ENCODE measurements at regions of chr17 and their contacts with region 1.

Region 1: GRCh38 chr17:75679706-75680442 is 12.7 kb downstream of the SAP30BP start:
- DNase-seq: no peak
- ATAC-seq: peak in 2 of 4 donors; percentile 55 to 60
- H3K4me3 ChIP-seq: no peak overlapping the region
- H3K27ac ChIP-seq: peak overlapping the region; percentile 23
- H3K4me1 ChIP-seq: peaks cover 33% of the 10 kb centered on the region
- H3K27me3 ChIP-seq: no peaks in the 10 kb centered on the region
- CTCF ChIP-seq: peak; percentile 21

Region 2: DNA sequence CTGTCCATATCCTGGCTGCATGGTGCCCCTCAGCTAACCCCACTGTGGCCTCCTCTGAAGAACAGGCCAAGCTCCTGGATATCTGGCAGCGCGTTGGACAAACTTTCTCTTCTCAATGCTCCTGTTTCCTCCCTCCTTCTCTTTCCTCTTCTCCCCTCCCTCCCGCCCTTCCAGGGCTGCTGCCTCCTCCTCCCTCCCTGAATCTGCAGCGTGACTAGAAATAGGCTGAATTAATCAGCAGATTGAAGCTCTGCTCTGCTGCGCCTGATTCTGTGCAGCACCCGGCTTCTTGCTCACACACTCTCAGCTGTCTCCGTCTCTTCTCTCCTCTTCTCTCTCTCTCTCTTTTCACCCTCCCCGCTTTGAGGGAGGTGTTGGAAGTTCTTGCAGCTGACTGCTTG is 203.6 kb before region 1 on chr17:
- intact Hi-C with region 1: no loop called
- DNase-seq: no peak
- ATAC-seq: peak; percentile 57 to 84 (median 78)
- H3K4me3 ChIP-seq: peak overlapping the region; percentile 43
- H3K27ac ChIP-seq: peak overlapping the region; percentile 85
- H3K4me1 ChIP-seq: peaks cover 78% of the 10 kb centered on the region
- H3K27me3 ChIP-seq: no peaks in the 10 kb centered on the region
- CTCF ChIP-seq: no peak

Region 3: DNA sequence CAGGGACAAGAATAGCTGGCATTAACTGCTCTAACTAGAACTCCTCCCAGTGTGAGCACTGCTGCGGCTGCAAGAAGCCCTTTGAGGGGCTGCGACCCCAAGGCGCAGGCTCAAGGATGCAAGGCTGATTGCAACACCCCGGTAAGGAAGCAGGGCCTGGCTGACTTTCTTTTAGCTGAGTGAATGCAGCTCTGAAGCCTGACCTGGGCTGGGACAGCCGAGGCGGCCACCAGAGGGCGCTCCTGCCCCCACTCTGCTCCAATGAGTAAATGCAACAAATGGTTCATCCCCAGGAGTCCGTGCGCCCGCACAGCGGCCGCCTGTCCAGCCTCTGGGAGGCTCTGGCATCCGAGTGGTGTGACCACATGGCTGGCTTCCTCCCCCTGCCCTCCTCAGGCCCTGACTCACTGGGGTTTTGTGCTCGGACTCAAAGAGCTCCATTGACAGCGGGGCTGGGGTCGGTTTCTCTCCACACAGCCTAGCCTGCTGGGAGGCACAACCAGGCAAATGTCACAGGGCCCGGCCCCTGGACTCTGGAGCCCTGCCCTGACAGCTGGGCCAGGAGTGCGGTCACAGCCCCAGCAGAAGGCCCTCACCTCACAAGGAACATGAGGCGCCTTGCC is 46.9 kb before region 1 on chr17 and contains the start of gene SMIM5:
- intact Hi-C with region 1: loop called in 1 of 2 experiments (anchors 5 kb)
- DNase-seq: peak; percentile 90 to 95
- ATAC-seq: peak; percentile 75 to 88 (median 78)
- H3K4me3 ChIP-seq: peak within 1 kb of the TSS; percentile 33
- H3K27ac ChIP-seq: peak within 1 kb of the TSS; percentile 78
- H3K4me1 ChIP-seq: peaks cover 46% of the 10 kb centered on the region
- H3K27me3 ChIP-seq: no peaks in the 10 kb centered on the region
- CTCF ChIP-seq: peak; percentile 97
- total RNA-seq, gene SMIM5: 0.11 to 0.28 (median 0.17) TPM in 3 of 4 donors, not detected in the other

Region 4: GRCh38 chr17:75827252-75828115 is 147.6 kb after region 1 on chr17:
- intact Hi-C with region 1: no loop called
- DNase-seq: peak; percentile 80 to 89
- ATAC-seq: peak; percentile 73 to 85 (median 79)
- H3K4me3 ChIP-seq: peak overlapping the region; percentile 49
- H3K27ac ChIP-seq: peak overlapping the region; percentile 67
- H3K4me1 ChIP-seq: peaks cover 9% of the 10 kb centered on the region
- H3K27me3 ChIP-seq: no peaks in the 10 kb centered on the region
- CTCF ChIP-seq: peak; percentile 64

Measured in psoas muscle (tissue), 8 donors.